Panc1 (cell line): ENCODE measurements at regions of chr9 and their contacts with region 1.

Region 1: GRCh38 chr9:134163353-134164196 is 789 bp downstream of the RNU6ATAC start:
- DNase-seq: no peak
- ATAC-seq: no peak
- H3K4me3 ChIP-seq: no peak overlapping the region
- H3K27ac ChIP-seq: peak overlapping the region; percentile 73; the same call in 1 of the 2 replicates
- H3K4me1 ChIP-seq: no peaks in the 10 kb centered on the region; the same call in 1 of the 2 replicates
- H3K27me3 ChIP-seq: no peaks in the 10 kb centered on the region
- CTCF ChIP-seq: no peak

Region 2: DNA sequence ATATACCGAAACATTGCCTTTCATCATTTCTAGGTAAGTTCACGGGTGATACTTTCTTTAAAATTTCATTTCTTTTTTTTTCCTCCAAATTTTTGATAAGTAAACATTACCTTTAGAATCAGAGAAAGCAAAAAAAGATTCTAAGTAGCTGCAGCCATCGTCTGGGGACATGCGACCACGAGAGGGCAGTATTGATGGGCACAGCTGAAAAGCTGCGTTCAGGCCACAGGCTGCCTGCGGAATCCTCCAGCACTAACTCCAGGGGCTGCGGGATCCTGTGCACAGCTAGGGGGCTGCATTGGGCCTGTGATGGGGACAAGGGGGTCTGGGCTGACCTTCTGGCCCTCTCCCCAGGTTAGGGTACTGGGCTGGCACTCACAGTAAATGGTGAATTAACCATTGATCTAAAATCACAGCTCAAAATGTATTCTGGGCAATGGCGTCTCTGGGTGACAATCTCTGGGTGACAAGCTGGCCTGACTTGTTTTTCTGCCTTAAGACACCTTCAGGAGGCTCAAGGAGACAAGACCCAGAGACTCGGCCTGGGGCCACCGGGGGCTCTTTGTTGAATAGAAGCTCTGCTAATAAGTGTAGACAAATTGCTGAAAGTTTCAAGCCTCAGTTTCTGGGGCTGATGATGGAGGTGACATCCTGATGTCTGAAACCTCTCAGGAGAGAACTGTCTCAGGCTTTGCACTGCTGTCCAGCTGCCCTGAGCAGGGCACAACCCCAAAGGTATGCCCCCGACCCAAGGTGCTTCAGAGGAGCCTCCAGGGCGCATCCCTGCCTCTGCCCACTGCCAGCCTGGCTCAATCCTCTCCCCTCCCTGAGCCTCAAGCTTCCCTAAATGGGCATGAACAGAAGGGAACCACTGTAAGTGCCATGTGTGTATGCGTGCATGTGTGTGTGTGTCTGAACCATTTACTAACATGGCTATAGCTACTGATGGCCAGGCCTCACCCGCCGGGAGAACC is 381.1 kb before region 1 on chr9:
- CTCF ChIA-PET with region 1: interaction called, 12 read pairs
- POLR2A ChIA-PET with region 1: no interaction called
- in situ Hi-C with region 1: no loop called
- intact Hi-C with region 1: no loop called
- DNase-seq: peak; percentile 4
- ATAC-seq: peak; percentile 87
- H3K4me3 ChIP-seq: no peak overlapping the region
- H3K27ac ChIP-seq: no peak overlapping the region
- H3K4me1 ChIP-seq: no peaks in the 10 kb centered on the region
- H3K27me3 ChIP-seq: no peaks in the 10 kb centered on the region
- CTCF ChIP-seq: peak; percentile 86

Region 3: GRCh38 chr9:134433101-134433500 is 269.5 kb after region 1 on chr9:
- CTCF ChIA-PET with region 1: no interaction called
- POLR2A ChIA-PET with region 1: interaction called, 12 read pairs
- in situ Hi-C with region 1: no loop called
- intact Hi-C with region 1: no loop called
- DNase-seq: no peak
- ATAC-seq: 0 out of 2 replicates have a peak, but pooled peaks have one; percentile 11
- H3K4me3 ChIP-seq: no peak overlapping the region
- H3K27ac ChIP-seq: no peak overlapping the region
- H3K4me1 ChIP-seq: no peaks in the 10 kb centered on the region
- H3K27me3 ChIP-seq: no peaks in the 10 kb centered on the region
- CTCF ChIP-seq: no peak

Region 4: GRCh38 chr9:134597957-134598883 is 434.6 kb after region 1 on chr9:
- CTCF ChIA-PET with region 1: no interaction called
- POLR2A ChIA-PET with region 1: interaction called, 10 read pairs
- in situ Hi-C with region 1: no loop called
- intact Hi-C with region 1: no loop called
- DNase-seq: no peak
- ATAC-seq: no peak
- H3K4me3 ChIP-seq: no peak overlapping the region
- H3K27ac ChIP-seq: no peak overlapping the region
- H3K4me1 ChIP-seq: no peaks in the 10 kb centered on the region
- H3K27me3 ChIP-seq: no peaks in the 10 kb centered on the region
- CTCF ChIP-seq: no peak